ENCODE measurements at regions of chr1 and their contacts with region 1.

Region 1: GRCh38 chr1:111507411-111508201 is 4.2 kb upstream of the ADORA3 start:
- DNase-seq: peak; percentile 55
- H3K4me3 Mint-ChIP-seq: peak overlapping the region; percentile 56
- H3K27ac Mint-ChIP-seq: no peak overlapping the region
- H3K4me1 Mint-ChIP-seq: peaks cover 10% of the 10 kb centered on the region
- H3K27me3 Mint-ChIP-seq: no peaks in the 10 kb centered on the region
- CTCF ChIP-seq: no peak

Region 2: DNA sequence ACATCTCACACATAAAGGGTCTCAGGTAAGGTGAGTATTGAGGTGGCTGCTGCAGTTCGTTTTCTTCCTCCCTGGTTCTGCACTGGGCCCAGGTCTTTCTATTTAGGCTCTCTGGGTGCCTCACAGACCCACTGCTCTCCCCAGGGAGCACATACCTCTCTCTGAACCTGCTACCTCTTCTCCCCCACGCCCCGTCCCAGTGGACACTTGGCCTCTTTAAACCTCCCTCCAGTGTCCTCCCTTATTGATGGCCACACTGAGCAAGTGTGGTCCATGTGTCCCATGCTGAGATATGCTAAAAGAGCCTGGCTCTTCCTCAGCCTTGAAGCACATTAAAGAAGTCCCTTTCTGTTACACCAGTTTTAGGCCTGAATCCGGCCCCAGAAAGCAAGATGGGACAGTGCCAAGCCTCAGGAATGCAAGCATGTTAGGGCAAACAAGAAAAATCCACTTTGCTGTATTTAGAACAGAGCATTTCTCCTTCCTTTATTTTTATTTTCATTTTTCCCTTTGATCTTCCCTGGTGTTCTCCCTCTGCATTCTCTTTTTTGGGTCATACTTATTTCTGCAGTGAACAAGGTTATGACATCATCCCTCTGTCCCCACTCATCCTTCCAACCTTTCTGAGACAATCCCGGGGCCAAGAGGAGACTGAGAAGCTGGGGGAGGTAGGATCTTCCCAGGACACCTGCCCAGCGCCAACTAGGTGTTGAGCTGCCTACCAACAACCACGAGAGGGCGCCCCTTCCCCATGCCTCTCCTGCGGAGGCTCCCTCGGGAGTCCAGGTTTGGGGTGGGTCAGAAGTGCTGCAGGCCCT is 285.1 kb before region 1 on chr1:
- CTCF ChIA-PET with region 1: no interaction called
- POLR2A ChIA-PET with region 1: no interaction called
- intact Hi-C with region 1: loop called (anchors 5 kb)
- DNase-seq: peak; percentile 81
- H3K4me3 Mint-ChIP-seq: no peak overlapping the region
- H3K27ac Mint-ChIP-seq: peak overlapping the region; percentile 36
- H3K4me1 Mint-ChIP-seq: peaks cover 31% of the 10 kb centered on the region
- H3K27me3 Mint-ChIP-seq: no peaks in the 10 kb centered on the region
- CTCF ChIP-seq: peak; percentile 93

Region 3: DNA sequence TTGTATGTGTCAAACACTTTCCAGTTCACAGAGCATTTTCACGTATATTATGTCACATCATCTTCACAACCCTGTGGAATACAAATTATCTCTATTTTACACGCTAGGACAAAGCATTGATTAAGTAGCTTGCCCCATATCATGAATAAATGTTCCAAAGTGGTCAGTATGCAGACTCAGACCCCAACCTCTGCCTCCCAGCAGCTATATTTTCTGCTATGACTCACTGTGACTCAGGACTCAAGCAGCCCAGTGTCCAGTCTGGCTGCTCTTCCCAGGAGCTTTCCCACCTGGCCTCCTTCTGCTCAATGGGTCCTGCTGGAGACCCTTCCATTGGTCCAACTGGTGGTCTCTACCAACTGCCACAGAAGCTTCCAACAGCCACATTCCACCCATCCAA is 56.0 kb after region 1 on chr1:
- CTCF ChIA-PET with region 1: interaction called, 11 read pairs
- POLR2A ChIA-PET with region 1: no interaction called
- intact Hi-C with region 1: no loop called
- DNase-seq: peak; percentile 49
- H3K4me3 Mint-ChIP-seq: no peak overlapping the region
- H3K27ac Mint-ChIP-seq: no peak overlapping the region
- H3K4me1 Mint-ChIP-seq: peaks cover 14% of the 10 kb centered on the region
- H3K27me3 Mint-ChIP-seq: no peaks in the 10 kb centered on the region
- CTCF ChIP-seq: no peak

Region 4: DNA sequence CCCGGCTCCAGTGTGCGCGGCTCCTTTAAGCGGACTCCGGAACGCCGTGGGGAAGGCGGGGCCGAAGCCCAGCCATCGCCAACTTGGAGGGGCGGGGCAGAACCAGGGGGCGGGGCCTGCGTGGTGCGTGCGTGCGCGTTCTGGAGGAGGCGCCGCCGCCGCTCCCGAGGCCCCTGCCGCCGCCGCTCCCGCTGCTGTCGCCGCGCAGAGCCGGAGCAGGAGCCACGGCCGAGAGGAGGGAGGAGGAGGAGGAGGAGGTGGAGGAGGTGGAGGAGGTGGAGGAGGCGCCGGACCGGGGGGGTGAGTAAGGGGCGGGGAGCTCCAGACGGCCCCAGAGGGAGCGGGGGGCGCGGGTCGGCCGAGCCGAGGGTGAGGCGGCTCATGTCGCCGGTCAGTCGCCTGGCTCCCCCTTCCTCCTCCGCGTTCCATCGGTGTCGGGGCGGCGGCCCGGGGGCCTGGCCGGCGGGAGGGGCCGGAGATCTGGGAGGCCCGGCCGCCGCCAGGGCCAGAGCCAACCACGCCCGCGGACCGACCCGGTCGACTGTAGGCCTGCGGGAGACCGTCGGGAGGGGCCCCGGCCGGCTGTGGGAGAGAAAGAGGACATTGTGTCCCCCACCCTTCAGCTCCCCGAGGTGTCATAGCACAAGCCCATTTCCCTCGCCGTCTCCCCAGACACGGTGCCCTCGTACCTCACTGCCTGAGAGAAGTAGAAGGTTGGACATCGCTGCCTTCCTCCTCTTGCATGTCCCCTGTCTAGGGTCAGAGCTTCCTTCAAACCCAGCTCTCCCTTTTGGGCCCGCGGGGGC is 112.2 kb after region 1 on chr1 and contains the start of gene RAP1A:
- CTCF ChIA-PET with region 1: interaction called, 19 read pairs
- POLR2A ChIA-PET with region 1: interaction called, 27 read pairs
- intact Hi-C with region 1: loop called (anchors 1 kb)
- DNase-seq: peak; percentile 90
- H3K4me3 Mint-ChIP-seq: peak within 1 kb of the TSS; percentile 94
- H3K27ac Mint-ChIP-seq: peak within 1 kb of the TSS; percentile 74
- H3K4me1 Mint-ChIP-seq: peaks cover 26% of the 10 kb centered on the region
- H3K27me3 Mint-ChIP-seq: no peaks in the 10 kb centered on the region
- CTCF ChIP-seq: no peak
- total RNA-seq, gene RAP1A: 31.5 and 39.3 TPM in 2 replicates

Region 5: DNA sequence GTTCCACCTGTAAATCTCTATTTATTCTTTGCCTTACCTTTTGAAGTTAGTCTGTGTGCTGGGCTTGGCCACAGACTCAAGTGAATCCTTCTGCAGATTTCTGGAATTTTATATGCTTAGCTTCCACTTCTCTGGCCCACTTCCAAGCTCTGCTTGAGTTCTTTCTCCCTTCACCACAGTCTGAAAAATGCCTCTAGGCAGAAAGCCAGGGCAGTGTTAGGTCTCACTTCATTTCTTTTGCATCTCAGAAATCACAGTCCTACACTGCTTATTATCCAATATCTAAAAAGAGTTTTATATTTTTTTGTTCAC is 182.7 kb after region 1 on chr1:
- CTCF ChIA-PET with region 1: interaction called, 11 read pairs
- POLR2A ChIA-PET with region 1: no interaction called
- intact Hi-C with region 1: no loop called
- DNase-seq: peak; percentile 80
- H3K4me3 Mint-ChIP-seq: no peak overlapping the region
- H3K27ac Mint-ChIP-seq: no peak overlapping the region
- H3K4me1 Mint-ChIP-seq: peaks cover 8% of the 10 kb centered on the region
- H3K27me3 Mint-ChIP-seq: no peaks in the 10 kb centered on the region
- CTCF ChIP-seq: no peak

Region 6: DNA sequence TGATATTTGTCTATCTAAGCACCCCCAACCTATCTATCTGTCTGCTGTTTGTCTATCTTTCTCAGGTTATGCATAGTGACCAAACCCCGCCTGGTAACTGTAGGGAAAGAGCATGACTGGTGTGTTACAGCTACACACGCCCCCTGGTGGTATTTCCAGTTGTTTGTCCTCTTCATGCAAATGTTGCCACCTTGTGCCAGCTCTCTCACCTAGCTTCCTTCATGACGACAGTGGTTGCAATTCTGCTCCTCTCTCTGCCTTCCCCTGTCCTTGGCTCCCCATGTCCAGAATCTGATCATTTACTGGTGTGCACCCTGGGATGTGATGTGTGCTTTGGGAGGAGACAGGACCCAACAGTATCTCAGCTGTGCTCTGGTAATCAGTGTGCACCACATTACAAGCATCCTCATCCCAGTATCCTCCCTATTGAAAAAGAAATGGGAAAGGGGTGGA is 239.7 kb after region 1 on chr1:
- CTCF ChIA-PET with region 1: interaction called, 10 read pairs
- POLR2A ChIA-PET with region 1: interaction called, 3 read pairs
- intact Hi-C with region 1: no loop called
- DNase-seq: peak; percentile 89
- H3K4me3 Mint-ChIP-seq: no peak overlapping the region
- H3K27ac Mint-ChIP-seq: no peak overlapping the region
- H3K4me1 Mint-ChIP-seq: no peaks in the 10 kb centered on the region
- H3K27me3 Mint-ChIP-seq: no peaks in the 10 kb centered on the region
- CTCF ChIP-seq: peak; percentile 61

Region 7: GRCh38 chr1:112209488-112209887 is 701.9 kb after region 1 on chr1:
- CTCF ChIA-PET with region 1: no interaction called
- POLR2A ChIA-PET with region 1: no interaction called
- intact Hi-C with region 1: no loop called
- DNase-seq: peak; percentile 20
- H3K4me3 Mint-ChIP-seq: no peak overlapping the region
- H3K27ac Mint-ChIP-seq: no peak overlapping the region
- H3K4me1 Mint-ChIP-seq: no peaks in the 10 kb centered on the region
- H3K27me3 Mint-ChIP-seq: peaks cover 42% of the 10 kb centered on the region
- CTCF ChIP-seq: no peak

Region 8: DNA sequence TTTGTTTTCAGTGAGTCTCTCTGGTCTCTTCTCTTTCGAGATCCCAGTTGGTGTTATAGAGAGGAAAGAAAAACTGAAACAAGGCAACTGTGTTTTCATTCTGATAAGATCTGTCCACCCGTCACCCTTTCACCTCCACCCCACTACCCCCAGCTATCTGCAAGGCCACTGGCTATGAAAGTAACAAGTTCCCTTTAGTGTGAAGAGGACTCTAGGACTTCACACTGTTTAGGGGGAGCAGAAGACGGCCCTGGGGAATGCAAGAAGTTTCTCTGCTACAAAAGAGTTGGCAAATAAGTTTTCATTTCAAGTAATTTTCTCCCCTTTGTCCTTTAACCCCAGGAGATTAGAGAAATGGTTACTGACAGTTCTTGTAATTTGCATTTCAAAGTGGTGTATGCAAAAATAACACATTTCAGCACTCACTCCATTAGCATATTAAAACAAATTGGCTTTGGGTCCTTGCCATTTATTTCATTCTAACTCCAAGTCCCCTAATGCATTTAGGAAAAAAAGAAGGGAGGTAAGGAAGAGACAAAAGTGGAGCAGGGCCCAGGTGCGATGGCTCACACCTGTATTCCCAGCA is 1287.1 kb after region 1 on chr1:
- CTCF ChIA-PET with region 1: no interaction called
- POLR2A ChIA-PET with region 1: no interaction called
- intact Hi-C with region 1: no loop called
- DNase-seq: no peak
- H3K4me3 Mint-ChIP-seq: no peak overlapping the region
- H3K27ac Mint-ChIP-seq: no peak overlapping the region
- H3K4me1 Mint-ChIP-seq: no peaks in the 10 kb centered on the region
- H3K27me3 Mint-ChIP-seq: no peaks in the 10 kb centered on the region
- CTCF ChIP-seq: no peak